ENCODE measurements at regions of chr13 and their contacts with region 1.

Region 1: GRCh38 chr13:23146811-23147625 is 33.8 kb upstream of the SGCG start:
- H3K4me3 Mint-ChIP-seq: peak overlapping the region; percentile 54
- H3K27ac Mint-ChIP-seq: peak overlapping the region; percentile 82
- H3K4me1 Mint-ChIP-seq: peaks cover 32% of the 10 kb centered on the region
- H3K27me3 Mint-ChIP-seq: no peaks in the 10 kb centered on the region

Region 2: GRCh38 chr13:22114630-22115311 is 1032.2 kb before region 1 on chr13:
- intact Hi-C with region 1: loop called (anchors 10 kb)
- H3K4me3 Mint-ChIP-seq: peak overlapping the region; percentile 34
- H3K27ac Mint-ChIP-seq: peak overlapping the region; percentile 96
- H3K4me1 Mint-ChIP-seq: peaks cover 33% of the 10 kb centered on the region
- H3K27me3 Mint-ChIP-seq: peaks cover 52% of the 10 kb centered on the region

Region 3: GRCh38 chr13:22801402-22802003 is 345.5 kb before region 1 on chr13:
- intact Hi-C with region 1: loop called (anchors 5 kb)
- H3K4me3 Mint-ChIP-seq: no peak overlapping the region
- H3K27ac Mint-ChIP-seq: peak overlapping the region; percentile 36
- H3K4me1 Mint-ChIP-seq: peaks cover 27% of the 10 kb centered on the region
- H3K27me3 Mint-ChIP-seq: peaks cover 23% of the 10 kb centered on the region

Region 4: DNA sequence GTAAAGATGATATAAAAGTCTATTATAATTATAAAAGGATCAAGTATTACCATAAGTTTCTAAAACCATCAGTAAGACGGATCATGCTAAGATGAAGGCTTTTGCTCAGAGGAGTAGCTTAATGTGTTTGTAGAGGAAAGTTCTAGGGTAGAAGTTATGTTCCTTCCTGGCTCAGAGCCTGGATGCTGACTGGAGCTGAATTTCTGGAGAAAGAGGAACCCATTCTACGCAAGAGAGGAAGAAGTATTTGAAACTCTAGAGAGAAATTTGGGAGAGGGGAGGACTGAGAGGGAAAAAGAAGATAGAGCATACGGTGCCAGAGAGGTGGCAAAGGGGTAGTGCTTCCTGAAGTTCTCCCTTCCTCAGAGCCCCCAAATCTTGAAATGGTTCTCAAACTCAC is 17.7 kb before region 1 on chr13:
- intact Hi-C with region 1: loop called (anchors 1 kb)
- H3K4me3 Mint-ChIP-seq: no peak overlapping the region
- H3K27ac Mint-ChIP-seq: peak overlapping the region; percentile 70
- H3K4me1 Mint-ChIP-seq: peaks cover 11% of the 10 kb centered on the region
- H3K27me3 Mint-ChIP-seq: no peaks in the 10 kb centered on the region

Region 5: DNA sequence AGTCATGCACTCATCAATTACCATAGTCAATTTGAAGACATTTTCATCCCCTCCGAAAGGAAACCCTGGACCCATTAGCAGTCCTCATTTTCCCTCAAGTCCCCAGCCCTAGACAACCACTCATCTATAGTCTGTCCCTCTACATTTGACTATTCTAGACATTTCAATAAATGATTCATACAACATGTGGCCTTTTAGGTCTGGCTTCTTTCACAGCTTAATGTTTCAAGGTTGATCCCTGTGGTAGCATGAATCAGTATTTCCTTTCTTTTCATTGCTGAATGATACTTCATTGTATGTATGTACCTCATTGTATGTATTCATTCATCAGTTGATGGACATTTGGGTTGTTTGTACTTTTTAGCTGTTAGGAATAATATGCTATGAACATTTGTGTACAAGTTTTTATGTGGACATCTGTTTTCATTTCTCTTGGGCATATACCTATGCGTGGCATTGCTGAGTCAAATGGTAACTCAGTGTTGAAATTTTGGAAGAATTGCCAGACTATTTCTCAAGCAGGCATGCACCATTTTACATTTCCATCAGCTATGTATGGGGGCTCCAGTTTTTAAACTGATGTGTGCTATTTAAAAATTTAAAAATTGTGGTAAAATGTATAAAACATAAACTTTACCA is 1031.9 kb after region 1 on chr13:
- intact Hi-C with region 1: no loop called
- H3K4me3 Mint-ChIP-seq: no peak overlapping the region
- H3K27ac Mint-ChIP-seq: no peak overlapping the region
- H3K4me1 Mint-ChIP-seq: peaks cover 5% of the 10 kb centered on the region
- H3K27me3 Mint-ChIP-seq: no peaks in the 10 kb centered on the region

Measured in dendritic cell treated with granulocyte-macrophage colony-stimulating factor and Interleukin-4, amounts not matched to agents 40 ng/mL and 50 ng/mL, for 4 days (primary cell).